ENCODE measurements at regions of chr15 and their contacts with region 1.

Region 1: DNA sequence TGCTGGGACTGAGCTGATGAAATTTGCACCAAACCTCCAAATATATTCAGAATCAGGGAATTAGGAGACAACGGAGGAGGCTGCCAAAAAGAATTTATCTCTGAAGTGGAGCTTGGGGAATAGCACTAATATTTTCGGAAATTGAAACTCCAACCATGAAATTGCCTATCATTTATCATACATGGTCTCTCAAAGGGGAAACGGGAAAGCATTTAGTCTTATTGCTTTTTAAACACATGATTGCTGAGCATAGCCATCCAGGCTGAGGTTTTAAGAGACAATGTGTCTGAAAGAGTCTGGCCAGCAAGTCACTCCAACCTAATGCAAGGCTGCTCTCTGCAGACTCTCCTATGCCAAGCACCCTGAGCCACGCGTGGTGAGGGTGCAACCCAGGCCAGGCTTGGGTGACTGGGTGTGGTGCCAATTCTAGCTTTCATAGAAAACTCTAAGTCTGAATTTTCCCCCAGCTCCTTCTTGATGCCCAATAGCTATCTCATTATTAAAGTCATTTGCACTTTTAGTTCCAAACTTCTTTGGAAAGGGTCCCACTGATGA is 200.2 kb downstream of the RPLP1 start:
- DNase-seq: no peak
- ATAC-seq: no peak
- H3K4me3 Mint-ChIP-seq: no peak overlapping the region
- H3K27ac Mint-ChIP-seq: no peak overlapping the region
- H3K4me1 Mint-ChIP-seq: no peaks in the 10 kb centered on the region
- H3K27me3 Mint-ChIP-seq: peaks cover 66% of the 10 kb centered on the region
- CTCF ChIP-seq: no peak

Region 2: DNA sequence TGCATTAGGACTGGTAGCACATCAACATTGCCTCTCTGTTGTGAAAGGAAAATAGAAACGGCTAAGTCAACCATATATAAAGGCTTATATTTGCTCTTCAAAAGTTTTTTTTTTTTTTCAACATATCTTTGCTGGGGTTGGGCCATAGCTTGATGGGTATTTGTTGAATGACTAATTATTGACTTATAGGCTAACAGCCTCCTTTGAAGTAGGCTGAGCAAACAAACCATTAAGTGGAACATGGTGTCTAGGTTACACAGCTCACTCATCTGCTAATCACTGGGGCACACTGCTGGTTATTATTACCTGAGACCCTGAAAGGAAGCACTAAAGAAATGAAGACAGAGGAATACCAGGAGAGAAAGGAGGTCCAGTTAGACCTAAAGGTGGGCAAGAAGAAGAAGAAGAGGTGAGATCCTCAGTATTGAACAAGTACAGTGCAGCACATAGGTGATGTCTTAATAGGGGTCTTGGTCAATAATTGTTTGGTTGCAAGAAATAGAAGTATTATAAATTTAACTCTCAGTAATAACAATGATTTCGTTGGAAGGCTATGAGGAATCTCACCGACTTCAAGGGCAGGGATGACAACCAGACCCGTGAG is 60.8 kb before region 1 on chr15:
- CTCF ChIA-PET with region 1: no interaction called
- POLR2A ChIA-PET with region 1: interaction called, 11 read pairs
- intact Hi-C with region 1: no loop called
- DNase-seq: no peak
- ATAC-seq: no peak
- H3K4me3 Mint-ChIP-seq: no peak overlapping the region
- H3K27ac Mint-ChIP-seq: no peak overlapping the region
- H3K4me1 Mint-ChIP-seq: peaks cover 4% of the 10 kb centered on the region
- H3K27me3 Mint-ChIP-seq: peaks cover 28% of the 10 kb centered on the region
- CTCF ChIP-seq: no peak

Region 3: DNA sequence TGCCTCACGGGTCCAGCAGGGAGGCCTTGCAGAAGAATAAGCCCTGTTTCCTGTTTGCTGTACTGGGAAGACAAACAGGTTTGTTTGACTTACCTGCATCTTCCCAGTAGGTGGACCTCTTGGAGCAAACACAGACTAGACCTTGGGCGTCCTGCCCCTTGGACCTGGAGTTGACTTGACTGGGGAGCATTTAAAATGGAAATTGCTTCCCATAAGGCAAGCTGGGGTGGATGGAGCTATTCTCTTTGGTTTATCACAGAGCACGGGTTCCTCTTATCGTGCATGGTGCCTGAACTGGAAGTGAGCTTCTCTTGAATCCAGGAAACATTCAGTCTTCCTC is 48.8 kb before region 1 on chr15:
- CTCF ChIA-PET with region 1: no interaction called
- POLR2A ChIA-PET with region 1: no interaction called
- intact Hi-C with region 1: no loop called
- DNase-seq: no peak
- ATAC-seq: no peak
- H3K4me3 Mint-ChIP-seq: no peak overlapping the region
- H3K27ac Mint-ChIP-seq: no peak overlapping the region
- H3K4me1 Mint-ChIP-seq: no peaks in the 10 kb centered on the region
- H3K27me3 Mint-ChIP-seq: peaks cover 15% of the 10 kb centered on the region
- CTCF ChIP-seq: no peak

Measured in activated B cell treated with CpG ODN at 0.5 μM for 24 hours (primary cell).